Calu3 (cell line): ENCODE measurements at regions of chr14 and their contacts with region 1.

Region 1: DNA sequence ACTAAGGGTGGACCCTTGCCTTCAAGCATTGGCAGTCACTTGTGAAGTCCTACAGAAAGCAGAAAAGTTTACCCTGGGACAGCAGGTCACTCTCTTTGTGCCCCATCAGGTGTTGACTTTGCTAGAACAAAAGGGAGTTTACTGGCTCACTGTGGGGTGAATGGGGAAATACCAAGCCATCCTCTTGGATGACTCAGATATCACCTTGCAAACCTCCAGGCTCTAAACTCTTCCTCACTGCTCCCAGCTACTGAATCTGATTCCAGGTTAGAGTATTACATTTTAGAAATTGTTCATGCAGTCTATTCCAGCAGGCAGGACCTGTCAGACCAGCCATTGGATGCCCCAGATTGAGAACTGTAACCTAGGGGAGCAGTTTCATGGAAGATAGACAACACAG is 7.3 kb upstream of the EDDM3B start:
- DNase-seq: peak; percentile 40
- H3K4me3 Mint-ChIP-seq: no peak overlapping the region
- H3K27ac Mint-ChIP-seq: no peak overlapping the region
- H3K4me1 Mint-ChIP-seq: peaks cover 21% of the 10 kb centered on the region
- H3K27me3 Mint-ChIP-seq: no peaks in the 10 kb centered on the region
- CTCF ChIP-seq: no peak

Region 2: DNA sequence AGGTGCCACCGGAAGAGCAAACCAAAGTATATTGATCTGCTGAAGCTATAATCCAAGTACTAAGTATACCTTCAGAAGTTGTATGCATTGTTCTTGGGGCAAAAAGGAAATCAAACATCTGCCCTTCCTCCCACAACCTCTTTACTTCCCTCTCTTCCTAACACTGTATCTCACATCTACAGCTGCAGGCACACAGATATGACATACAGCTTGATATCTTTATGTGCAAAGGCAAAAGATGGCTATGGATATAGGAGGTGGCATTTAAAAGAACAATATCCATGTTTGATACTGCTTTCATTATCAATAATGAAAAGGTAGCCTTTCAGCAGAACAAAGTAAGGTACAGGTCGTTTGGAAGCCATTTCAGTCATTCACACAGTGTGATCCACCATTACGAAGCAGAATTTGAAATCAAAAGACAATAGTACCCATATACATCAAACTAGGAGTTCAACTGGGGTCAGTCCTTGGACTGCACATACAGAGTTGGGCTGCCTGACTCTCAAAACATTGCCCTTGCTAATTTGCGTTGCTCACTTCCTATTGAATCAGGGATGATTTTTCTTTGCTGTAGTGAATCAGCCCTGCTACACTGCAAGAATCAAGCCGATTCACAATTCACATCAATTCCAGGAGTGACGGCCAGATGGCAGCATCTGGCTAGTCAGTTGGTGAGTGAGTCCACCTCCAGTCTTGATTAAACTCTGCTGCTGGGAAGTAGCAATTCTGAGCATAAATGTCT is 63.5 kb before region 1 on chr14:
- CTCF ChIA-PET with region 1: no interaction called
- intact Hi-C with region 1: loop called (anchors 5 kb)
- DNase-seq: peak; percentile 75
- H3K4me3 Mint-ChIP-seq: no peak overlapping the region
- H3K27ac Mint-ChIP-seq: peak overlapping the region; percentile 76
- H3K4me1 Mint-ChIP-seq: peaks cover 9% of the 10 kb centered on the region
- H3K27me3 Mint-ChIP-seq: no peaks in the 10 kb centered on the region
- CTCF ChIP-seq: peak; percentile 71

Region 3: GRCh38 chr14:20723488-20723887 is 37.5 kb before region 1 on chr14:
- CTCF ChIA-PET with region 1: interaction called, 4 read pairs
- intact Hi-C with region 1: loop called (anchors 5 kb)
- DNase-seq: no peak
- H3K4me3 Mint-ChIP-seq: no peak overlapping the region
- H3K27ac Mint-ChIP-seq: peak overlapping the region; percentile 50
- H3K4me1 Mint-ChIP-seq: peaks cover 74% of the 10 kb centered on the region
- H3K27me3 Mint-ChIP-seq: no peaks in the 10 kb centered on the region
- CTCF ChIP-seq: no peak

Region 4: DNA sequence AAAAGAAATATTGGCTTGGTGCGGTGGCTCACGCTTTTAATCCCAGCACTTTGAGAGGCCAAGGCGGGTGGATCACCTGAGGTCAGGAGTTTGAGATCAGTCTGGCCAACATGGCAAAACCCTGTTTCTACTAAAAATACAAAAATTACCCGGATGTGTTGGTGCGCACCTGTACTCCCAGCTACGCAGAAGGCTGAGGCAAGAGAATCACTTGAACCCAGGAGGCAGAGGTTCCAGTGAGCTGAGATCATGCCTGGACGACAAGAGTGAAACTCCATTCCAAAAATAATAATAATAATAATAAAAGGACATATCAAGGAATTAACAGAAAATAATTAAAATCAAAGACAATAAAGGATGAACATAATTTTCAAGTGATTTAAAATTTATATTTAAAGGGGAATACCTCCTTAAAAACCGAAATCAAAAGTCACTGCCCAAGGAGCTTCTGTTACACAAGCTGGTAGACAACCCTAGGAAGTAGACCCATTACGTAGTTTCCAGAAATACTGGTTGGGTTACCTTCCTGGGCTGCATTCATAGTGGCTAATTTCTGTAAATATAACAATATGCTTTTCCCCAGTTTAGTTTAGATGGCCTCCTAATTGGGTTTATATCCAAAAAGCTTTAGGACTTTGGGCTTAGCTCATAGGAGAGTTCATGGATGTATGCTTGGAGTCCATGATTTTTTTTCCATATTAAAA is 17.5 kb before region 1 on chr14:
- CTCF ChIA-PET with region 1: no interaction called
- intact Hi-C with region 1: loop called (anchors 2 kb)
- DNase-seq: peak; percentile 45
- H3K4me3 Mint-ChIP-seq: no peak overlapping the region
- H3K27ac Mint-ChIP-seq: no peak overlapping the region
- H3K4me1 Mint-ChIP-seq: peaks cover 32% of the 10 kb centered on the region
- H3K27me3 Mint-ChIP-seq: no peaks in the 10 kb centered on the region
- CTCF ChIP-seq: no peak

Region 5: GRCh38 chr14:20782280-20782890 is 21.4 kb after region 1 on chr14:
- CTCF ChIA-PET with region 1: no interaction called
- intact Hi-C with region 1: no loop called
- DNase-seq: no peak
- H3K4me3 Mint-ChIP-seq: no peak overlapping the region
- H3K27ac Mint-ChIP-seq: no peak overlapping the region
- H3K4me1 Mint-ChIP-seq: peaks cover 4% of the 10 kb centered on the region
- H3K27me3 Mint-ChIP-seq: no peaks in the 10 kb centered on the region
- CTCF ChIP-seq: no peak

Region 6: DNA sequence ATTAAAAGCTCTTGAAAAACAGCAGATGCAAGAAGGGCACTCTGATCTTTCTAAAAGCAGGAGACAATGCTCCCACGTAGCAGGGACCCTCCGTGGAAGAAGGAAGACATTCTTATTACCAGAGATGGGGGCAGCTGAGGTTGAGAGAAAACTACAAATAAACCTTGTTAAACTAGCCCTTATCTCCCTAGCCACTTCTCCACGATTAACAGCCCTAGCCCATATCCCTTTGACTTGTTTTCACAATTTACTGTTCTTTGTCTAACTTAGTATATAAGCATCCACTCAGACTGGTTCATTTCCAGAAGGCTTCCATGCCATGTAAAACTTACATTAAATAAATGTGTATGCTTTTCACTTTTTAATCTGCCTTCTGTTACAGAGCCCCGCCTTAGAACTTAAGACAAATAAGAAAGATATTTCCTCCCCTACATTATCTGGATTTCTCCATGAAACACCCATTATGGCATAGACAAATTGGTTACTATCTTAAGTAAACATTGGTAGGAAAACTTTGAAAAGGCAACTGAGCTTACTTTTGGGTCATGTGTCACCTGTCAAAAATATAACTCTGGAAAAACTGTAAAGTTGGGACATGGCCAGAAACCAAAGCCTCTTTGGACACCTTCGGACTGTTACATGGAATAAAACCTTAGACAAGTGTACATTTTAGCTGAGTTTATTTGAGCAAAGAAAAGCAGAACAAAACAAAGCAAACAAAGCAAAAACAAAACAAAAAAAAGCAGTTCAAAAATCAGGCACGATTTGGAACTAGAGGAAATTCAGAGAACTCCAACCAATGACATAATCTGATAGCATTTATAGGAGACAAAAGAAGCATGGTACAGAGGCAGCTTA is 46.6 kb after region 1 on chr14:
- CTCF ChIA-PET with region 1: interaction called, 3 read pairs
- intact Hi-C with region 1: loop called (anchors 5 kb)
- DNase-seq: no peak
- H3K4me3 Mint-ChIP-seq: no peak overlapping the region
- H3K27ac Mint-ChIP-seq: peak overlapping the region; percentile 61
- H3K4me1 Mint-ChIP-seq: peaks cover 30% of the 10 kb centered on the region
- H3K27me3 Mint-ChIP-seq: no peaks in the 10 kb centered on the region
- CTCF ChIP-seq: no peak